Activated T-helper 2 cell treated with anti-CD3 and anti-CD28 coated beads, Interferon-gamma antibody, Interleukin-2, Interleukin-4, amounts not matched to agents 10 μg/mL and 5 μg/mL and 100 μg/mL, durations not matched to agents 14 hours and 24 hours and 36 hours (primary cell): ENCODE measurements at regions of chr2 and their contacts with region 1.

Region 1: DNA sequence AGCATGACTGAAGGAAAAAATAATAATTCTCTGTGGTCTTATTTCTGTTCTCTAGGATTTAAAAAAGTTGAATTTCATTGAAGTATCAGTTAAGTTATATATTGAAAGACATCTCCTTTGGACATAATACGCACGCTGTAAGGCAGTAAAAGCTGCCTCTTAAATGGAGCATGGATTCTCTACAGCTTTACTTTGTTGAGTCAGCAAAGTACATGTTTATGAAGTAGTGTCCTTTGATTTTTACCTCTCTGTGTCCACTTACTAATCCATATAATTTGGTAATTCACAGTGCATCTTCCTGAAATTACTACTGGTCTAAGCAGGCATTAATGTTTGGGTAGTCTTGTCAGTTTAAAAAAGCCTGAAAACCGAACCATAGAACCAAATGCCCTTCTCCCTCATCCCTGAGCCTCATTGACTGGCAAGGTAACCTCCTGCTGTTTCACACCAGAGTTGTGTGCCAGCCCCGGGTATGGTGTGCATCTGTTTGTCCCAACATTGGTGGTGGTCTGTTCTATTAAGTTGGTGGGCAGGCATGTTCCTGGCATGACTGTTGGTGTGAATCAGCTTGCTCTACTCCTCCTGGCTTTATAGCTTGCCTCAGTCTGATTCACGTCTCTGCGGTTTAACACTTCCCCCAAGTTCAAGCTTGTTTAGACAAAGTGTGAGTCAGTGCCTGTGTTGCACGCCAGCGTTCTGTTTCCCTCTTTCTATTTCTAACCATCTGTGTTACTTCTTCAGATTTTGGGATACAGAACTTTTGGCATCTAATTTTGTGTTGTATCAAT is 71.0 kb upstream of the ITM2C start:
- DNase-seq: peak; percentile 69
- H3K4me3 Mint-ChIP-seq: peak overlapping the region; percentile 60
- H3K27ac Mint-ChIP-seq: peak overlapping the region; percentile 94
- H3K4me1 Mint-ChIP-seq: peaks cover 50% of the 10 kb centered on the region
- H3K27me3 Mint-ChIP-seq: no peaks in the 10 kb centered on the region

Region 2: DNA sequence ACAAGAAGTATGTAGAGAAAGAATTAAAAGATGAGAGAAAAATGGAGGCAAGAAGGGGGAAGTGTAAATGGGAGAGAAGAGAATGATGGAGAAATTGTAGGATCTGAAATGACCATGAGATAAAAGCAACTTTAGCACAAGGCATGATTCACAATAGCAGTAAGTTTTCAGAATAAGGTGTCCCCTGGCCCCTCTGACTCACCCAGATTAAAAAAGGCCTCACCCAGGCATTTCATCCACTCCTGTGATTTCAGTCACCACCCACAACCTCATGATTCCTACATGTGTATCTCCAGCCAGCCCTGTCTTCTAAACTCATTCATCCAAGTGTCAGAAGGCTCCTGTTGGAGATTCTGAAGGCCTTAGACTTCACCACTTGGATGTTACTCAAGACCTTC is 321.1 kb before region 1 on chr2:
- intact Hi-C with region 1: loop called (anchors 1 kb)
- DNase-seq: no peak
- H3K4me3 Mint-ChIP-seq: peak overlapping the region; percentile 10
- H3K27ac Mint-ChIP-seq: peak overlapping the region; percentile 91
- H3K4me1 Mint-ChIP-seq: peaks cover 44% of the 10 kb centered on the region
- H3K27me3 Mint-ChIP-seq: no peaks in the 10 kb centered on the region

Region 3: DNA sequence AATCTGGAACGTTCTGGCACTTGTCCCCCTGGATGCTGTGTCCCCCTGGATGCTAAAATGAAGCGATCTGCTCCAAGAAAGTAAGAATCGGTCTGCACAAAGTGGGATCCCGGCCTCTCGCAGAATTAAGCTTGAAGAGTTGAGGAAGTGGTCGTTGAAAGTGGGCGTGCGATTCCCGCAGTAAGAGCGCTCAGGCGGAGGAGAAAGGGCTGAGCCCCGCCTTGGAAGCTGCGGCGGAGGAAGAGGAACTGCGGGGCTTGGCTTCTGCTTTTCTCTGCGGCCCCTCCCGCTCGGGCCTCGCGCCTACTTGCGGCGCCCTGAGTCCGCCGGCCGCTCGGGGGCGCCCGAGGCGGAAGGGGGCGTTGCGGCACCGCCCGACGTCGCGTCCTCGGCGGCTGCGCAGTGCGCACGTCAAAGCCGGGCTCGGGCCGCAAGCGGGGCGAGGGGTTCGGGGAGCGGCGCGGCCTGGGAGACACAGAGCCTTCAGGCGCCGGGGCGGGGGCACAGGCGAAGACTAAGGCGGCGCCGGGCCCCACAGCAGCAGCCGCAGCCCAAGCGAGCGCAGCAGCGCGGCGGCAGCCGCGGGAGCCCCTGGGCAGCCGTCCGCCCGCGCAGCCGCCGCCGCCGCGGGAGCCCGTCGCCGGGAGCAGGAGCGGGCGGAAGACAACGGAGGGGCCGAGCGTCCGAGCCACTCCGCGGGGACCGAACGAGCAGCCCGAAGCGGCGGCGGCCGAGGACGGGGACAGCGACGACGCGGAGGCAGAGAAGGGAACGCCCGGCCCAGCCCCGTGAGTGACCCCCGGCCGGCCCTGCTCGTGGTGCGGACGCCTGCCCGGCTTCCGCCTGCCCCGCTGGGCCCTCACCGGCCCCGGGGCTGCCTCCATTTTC is 81.1 kb before region 1 on chr2 and contains the start of gene CAB39:
- intact Hi-C with region 1: loop called (anchors 1 kb)
- DNase-seq: peak; percentile 87
- H3K4me3 Mint-ChIP-seq: peak within 1 kb of the TSS; percentile 99
- H3K27ac Mint-ChIP-seq: peak within 1 kb of the TSS; percentile 93
- H3K4me1 Mint-ChIP-seq: peaks cover 34% of the 10 kb centered on the region
- H3K27me3 Mint-ChIP-seq: no peaks in the 10 kb centered on the region
- total RNA-seq, gene CAB39: 173 and 176 TPM in 2 replicates

Region 4: GRCh38 chr2:230751062-230751461 is 42.7 kb before region 1 on chr2:
- intact Hi-C with region 1: loop called (anchors 1 kb)
- DNase-seq: no peak
- H3K4me3 Mint-ChIP-seq: no peak overlapping the region
- H3K27ac Mint-ChIP-seq: peak overlapping the region; percentile 77
- H3K4me1 Mint-ChIP-seq: peaks cover 70% of the 10 kb centered on the region
- H3K27me3 Mint-ChIP-seq: no peaks in the 10 kb centered on the region

Region 5: DNA sequence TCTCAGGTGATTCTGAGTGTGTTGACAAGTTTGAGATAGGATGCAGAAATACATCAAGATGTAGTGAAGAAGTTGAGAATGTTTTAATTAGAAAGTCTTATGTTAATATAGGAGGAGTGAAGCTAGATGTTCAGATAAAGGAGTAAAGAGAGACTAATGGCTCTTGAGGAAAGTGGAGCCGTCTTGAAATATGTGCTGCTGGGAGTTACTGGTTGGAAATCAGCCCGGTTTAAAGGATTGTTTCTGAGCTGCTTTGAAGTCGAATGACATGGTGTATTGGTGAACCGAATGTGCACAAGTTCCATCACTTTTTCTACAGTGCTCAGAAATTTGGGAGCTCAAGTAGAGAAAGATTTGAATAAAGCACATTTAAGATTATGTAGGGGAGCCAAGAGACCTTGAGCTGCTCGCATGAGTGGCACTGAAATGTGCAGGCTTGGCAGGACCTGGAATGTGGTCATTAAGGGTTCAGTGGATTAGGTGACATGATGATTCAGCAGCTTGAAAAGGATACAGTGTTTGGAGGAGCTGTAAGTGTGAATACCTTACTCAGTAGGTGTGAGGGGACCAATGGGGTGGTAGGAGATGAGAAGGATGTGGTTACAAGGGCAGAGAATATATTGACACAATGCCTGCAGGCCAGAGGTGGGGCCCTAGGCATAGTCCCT is 12.5 kb before region 1 on chr2:
- intact Hi-C with region 1: loop called (anchors 2 kb)
- DNase-seq: peak; percentile 26
- H3K4me3 Mint-ChIP-seq: peak overlapping the region; percentile 3
- H3K27ac Mint-ChIP-seq: peak overlapping the region; percentile 77
- H3K4me1 Mint-ChIP-seq: peaks cover 61% of the 10 kb centered on the region
- H3K27me3 Mint-ChIP-seq: no peaks in the 10 kb centered on the region

Region 6: DNA sequence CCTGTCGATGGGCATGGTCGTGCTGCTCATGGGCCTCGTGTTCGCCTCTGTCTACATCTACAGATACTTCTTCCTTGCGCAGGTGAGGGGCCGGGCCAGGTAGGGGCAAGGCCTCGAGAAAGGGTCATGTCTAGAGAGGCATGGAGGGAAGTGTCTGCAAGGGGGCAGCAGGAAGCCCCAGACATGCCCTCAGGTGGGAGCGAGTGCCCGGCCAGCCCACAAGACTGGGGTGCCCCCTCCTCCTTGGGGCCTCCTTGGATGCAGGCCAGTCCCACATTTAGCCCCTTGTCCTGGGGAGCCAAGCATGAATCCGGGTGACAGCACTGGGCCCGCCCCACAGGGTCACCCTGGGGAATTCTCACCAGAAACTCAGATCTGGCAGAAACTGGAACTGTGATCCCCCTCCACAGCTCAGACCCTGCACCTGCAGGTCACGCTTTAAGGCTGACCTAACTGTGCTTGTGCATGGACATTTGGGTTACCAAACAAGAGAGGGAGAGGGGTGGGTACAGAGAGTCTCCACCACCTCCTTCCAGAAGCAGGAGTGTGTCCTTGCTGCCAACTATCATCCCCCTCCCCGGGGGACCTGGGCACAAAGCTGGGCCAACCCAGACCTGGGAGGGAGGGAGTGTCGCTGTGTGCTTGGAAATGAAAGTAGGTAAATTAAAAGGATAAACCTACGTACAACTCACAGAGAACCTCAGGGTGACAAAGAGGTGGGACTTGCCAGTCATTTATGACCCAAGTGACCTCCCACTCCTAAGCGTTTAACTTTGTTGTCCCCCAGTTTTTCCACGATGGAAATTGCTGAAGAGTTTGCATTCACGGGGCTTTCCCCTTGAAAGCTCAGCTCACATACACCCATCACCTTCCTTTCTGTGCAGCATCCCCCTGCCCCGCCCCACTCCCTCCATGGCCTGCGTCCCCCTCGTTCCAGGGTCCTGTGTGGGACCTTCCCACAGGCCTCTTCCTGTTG is 80.0 kb after region 1 on chr2:
- intact Hi-C with region 1: no loop called
- DNase-seq: no peak
- H3K4me3 Mint-ChIP-seq: no peak overlapping the region
- H3K27ac Mint-ChIP-seq: no peak overlapping the region
- H3K4me1 Mint-ChIP-seq: peaks cover 3% of the 10 kb centered on the region
- H3K27me3 Mint-ChIP-seq: peaks cover 7% of the 10 kb centered on the region

Region 7: DNA sequence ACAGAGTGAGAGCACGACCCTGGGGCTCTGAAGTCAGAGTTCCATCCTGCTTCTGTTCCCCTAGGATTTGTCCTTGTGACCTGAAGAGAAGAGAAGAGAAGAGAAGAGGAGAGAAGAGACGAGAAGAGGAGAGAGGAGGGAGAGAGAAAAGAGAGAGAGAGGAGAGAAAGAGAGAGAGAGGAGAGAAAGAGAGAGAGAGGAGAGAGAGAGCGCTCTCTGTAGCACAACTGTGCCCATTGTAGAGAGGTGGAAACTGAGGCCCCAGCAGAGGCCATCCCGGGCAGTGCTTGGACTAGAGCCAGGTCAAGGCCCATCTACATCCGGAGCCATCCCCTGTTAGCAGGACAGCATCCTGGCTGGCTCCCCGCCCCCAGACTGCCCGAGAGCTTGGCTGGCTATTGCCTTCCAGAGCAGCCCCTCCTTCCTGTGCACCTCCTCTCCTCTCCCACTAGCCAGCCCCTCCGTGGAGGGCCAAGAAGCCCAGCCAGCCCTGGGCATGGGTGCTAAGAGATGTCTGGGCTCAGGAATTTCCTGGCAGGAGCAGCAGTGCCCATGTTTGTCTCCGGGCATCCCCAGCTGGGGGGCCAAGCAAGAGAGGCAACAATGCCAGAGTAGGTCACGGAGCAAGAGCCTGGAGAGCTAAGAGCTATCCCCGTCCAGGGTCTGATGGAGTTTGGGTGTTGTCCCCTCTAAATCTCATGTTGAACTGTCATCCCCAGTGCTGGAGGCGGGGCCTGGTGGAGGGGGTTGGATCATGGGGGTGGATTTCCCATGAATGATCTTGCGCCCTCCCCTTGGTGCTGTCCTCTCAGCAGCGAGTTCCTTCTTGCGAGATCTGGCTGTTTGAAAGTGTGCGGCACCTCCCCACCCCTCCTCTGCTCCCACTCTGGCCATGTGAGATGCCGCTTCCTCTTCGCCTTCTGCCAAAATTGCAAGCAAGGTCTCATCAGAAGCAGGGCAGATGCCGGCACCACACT is 149.4 kb after region 1 on chr2:
- intact Hi-C with region 1: no loop called
- DNase-seq: no peak
- H3K4me3 Mint-ChIP-seq: peak overlapping the region; percentile 3
- H3K27ac Mint-ChIP-seq: no peak overlapping the region
- H3K4me1 Mint-ChIP-seq: peaks cover 14% of the 10 kb centered on the region
- H3K27me3 Mint-ChIP-seq: peaks cover 23% of the 10 kb centered on the region

Region 8: DNA sequence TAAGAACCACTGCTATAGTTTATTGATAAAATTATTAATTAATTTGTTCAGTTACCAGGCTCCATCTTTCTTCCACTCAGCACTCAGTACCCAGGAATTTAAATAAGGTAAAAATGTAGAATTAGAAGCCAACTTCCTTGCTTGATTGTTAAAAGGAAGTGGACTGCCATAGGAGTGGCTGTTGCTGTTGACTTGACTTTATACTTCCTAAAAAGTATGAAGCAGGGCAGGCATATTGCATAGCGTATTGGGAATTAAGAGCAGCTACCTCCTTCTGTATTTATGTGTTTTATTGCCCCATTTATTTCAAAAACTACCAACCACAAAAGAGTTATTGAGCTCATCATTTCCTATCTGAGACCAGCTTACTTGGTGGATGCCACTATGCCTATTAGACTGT is 290.8 kb after region 1 on chr2:
- intact Hi-C with region 1: no loop called
- DNase-seq: no peak
- H3K4me3 Mint-ChIP-seq: no peak overlapping the region
- H3K27ac Mint-ChIP-seq: no peak overlapping the region
- H3K4me1 Mint-ChIP-seq: no peaks in the 10 kb centered on the region
- H3K27me3 Mint-ChIP-seq: no peaks in the 10 kb centered on the region